Posterior vena cava (tissue), 2 donors: ENCODE measurements at regions of chr1 and their contacts with region 1.

Region 1: DNA sequence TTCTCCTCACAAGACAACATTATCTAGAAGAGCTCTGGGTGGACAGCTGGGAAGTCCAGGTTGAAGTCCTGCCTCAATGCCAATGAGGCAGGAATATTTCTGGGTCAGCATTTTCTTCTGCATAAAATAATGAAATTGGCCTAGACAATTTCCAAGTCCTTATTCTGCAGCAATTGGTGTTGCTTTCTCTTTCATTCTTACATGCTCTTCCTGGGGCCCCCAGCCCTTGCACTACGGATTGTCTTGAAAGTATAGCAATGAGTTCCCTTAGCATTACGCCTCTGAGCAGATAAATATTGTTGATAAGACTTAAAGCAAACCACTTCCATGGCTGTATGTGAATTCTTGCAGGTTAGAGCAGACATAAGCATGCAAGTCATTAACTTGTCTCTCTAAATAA is 188.5 kb downstream of the TGFBR3 start:
- DNase-seq: no peak

Region 2: DNA sequence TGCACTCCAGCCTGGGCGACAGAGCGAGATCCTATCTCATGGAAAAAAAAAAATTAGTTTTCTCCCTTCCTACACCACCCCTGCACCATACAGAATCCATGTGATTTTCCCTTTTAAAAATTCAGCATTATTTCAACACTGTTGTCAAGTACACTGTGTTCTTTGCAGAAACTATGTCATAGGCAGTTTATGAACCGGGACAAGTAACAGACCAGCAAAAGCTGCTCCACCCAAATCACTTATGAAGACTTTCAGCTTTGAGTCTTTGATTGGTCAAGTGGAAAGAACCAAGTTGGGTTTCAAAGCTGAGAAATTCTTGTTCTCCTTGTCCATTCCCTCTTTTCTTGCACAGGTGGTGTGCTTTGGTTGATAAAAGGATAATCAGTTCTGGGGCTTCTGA is 23.8 kb before region 1 on chr1:
- intact Hi-C with region 1: loop called in 1 of 2 experiments (anchors 1 kb)
- DNase-seq: no peak

Region 3: GRCh38 chr1:91712981-91713841 is 15.8 kb after region 1 on chr1:
- intact Hi-C with region 1: loop called in 1 of 2 experiments (anchors 1 kb)
- DNase-seq: no peak